Activated CD8-positive, alpha-beta T cell treated with anti-CD3 and anti-CD28 coated beads, Interleukin-2, amount 10 ng/mL, durations not matched to agents 7 days and 5 days (primary cell): ENCODE measurements at regions of chr6 and their contacts with region 1.

Region 1: GRCh38 chr6:73329201-73329600 is 24.9 kb downstream of the DPPA5 start:
- DNase-seq: no peak
- ATAC-seq: no peak
- H3K4me3 Mint-ChIP-seq: no peak overlapping the region
- H3K27ac Mint-ChIP-seq: no peak overlapping the region
- H3K4me1 Mint-ChIP-seq: no peaks in the 10 kb centered on the region
- H3K27me3 Mint-ChIP-seq: peaks cover 19% of the 10 kb centered on the region

Region 2: GRCh38 chr6:73074175-73074574 is 255.0 kb before region 1 on chr6:
- CTCF ChIA-PET with region 1: no interaction called
- POLR2A ChIA-PET with region 1: no interaction called
- DNase-seq: no peak
- ATAC-seq: no peak
- H3K4me3 Mint-ChIP-seq: no peak overlapping the region
- H3K27ac Mint-ChIP-seq: no peak overlapping the region
- H3K4me1 Mint-ChIP-seq: no peaks in the 10 kb centered on the region
- H3K27me3 Mint-ChIP-seq: no peaks in the 10 kb centered on the region

Region 3: DNA sequence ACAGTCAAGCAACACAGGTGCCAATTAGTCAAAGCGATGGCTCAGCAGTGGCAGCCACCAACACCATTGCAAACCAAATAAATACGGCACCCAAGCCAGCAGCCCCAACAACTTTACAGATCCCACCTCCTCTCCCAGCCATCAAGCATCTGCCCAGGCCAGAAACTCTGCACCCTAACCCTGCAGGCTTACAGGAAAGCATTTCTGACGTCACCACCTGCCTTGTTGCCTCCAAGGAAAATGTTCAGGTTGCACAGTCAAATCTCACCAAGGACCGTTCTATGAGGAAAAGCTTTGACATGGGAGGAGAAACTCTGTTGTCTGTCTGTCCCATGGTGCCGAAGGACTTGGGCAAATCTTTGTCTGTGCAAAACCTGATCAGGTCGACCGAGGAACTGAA is 134.5 kb before region 1 on chr6:
- CTCF ChIA-PET with region 1: no interaction called
- POLR2A ChIA-PET with region 1: no interaction called
- DNase-seq: no peak
- ATAC-seq: no peak
- H3K4me3 Mint-ChIP-seq: no peak overlapping the region
- H3K27ac Mint-ChIP-seq: no peak overlapping the region
- H3K4me1 Mint-ChIP-seq: no peaks in the 10 kb centered on the region
- H3K27me3 Mint-ChIP-seq: no peaks in the 10 kb centered on the region

Region 4: GRCh38 chr6:73285674-73286283 is 43.4 kb before region 1 on chr6:
- CTCF ChIA-PET with region 1: interaction called, 51 read pairs
- POLR2A ChIA-PET with region 1: no interaction called
- DNase-seq: no peak
- ATAC-seq: no peak
- H3K4me3 Mint-ChIP-seq: no peak overlapping the region
- H3K27ac Mint-ChIP-seq: no peak overlapping the region
- H3K4me1 Mint-ChIP-seq: no peaks in the 10 kb centered on the region
- H3K27me3 Mint-ChIP-seq: no peaks in the 10 kb centered on the region

Region 5: DNA sequence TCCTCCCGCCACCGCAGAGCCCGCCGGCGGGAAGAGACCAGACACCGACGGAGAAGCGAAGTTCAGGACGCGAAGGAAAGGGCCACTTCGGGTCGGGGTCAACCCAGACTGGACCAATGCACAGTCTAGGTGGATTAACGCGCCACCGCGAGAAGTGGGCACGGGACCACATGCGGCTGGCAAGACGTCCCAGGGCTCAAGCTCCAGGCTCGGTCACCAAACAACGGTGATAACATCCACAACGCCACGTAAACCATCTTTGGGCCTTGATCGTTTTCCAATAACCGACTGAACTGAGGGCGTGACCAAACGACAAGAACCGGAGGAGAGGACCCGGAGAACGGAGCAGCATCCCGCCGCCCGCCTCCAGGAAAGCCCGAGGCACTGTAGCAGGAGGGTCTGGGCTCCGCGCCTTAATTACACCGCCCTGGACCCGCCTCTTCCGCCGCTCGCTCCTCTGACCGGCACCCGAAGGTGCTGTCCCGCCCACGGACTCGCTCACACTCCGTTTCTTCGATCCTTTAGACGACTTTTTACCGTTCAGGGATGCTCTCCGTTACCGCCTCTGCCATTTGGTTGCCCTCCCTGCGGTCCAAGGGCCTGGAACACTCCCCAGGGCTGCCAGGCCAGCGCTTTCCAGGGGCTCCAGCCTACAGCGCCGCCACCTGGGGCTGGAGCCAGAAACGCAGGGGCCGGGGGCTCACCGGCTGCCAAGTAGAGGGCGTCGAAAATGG is 19.3 kb before region 1 on chr6:
- CTCF ChIA-PET with region 1: interaction called, 10 read pairs
- POLR2A ChIA-PET with region 1: no interaction called
- DNase-seq: peak; percentile 62
- ATAC-seq: peak; percentile 96
- H3K4me3 Mint-ChIP-seq: peak overlapping the region; percentile 94
- H3K27ac Mint-ChIP-seq: peak overlapping the region; percentile 87
- H3K4me1 Mint-ChIP-seq: peaks cover 42% of the 10 kb centered on the region
- H3K27me3 Mint-ChIP-seq: peaks cover 31% of the 10 kb centered on the region

Region 6: GRCh38 chr6:73388800-73389512 is 59.8 kb after region 1 on chr6:
- CTCF ChIA-PET with region 1: interaction called, 18 read pairs
- POLR2A ChIA-PET with region 1: interaction called, 4 read pairs
- DNase-seq: peak; percentile 76
- ATAC-seq: peak; percentile 92
- H3K4me3 Mint-ChIP-seq: peak overlapping the region; percentile 81
- H3K27ac Mint-ChIP-seq: peak overlapping the region; percentile 83
- H3K4me1 Mint-ChIP-seq: peaks cover 36% of the 10 kb centered on the region
- H3K27me3 Mint-ChIP-seq: peaks cover 2% of the 10 kb centered on the region

Region 7: GRCh38 chr6:73461537-73462350 is 132.5 kb after region 1 on chr6 and contains the start of gene MTO1:
- CTCF ChIA-PET with region 1: no interaction called
- POLR2A ChIA-PET with region 1: no interaction called
- DNase-seq: peak; percentile 92
- ATAC-seq: peak; percentile 91
- H3K4me3 Mint-ChIP-seq: peak within 1 kb of the TSS; percentile 94
- H3K27ac Mint-ChIP-seq: peak within 1 kb of the TSS; percentile 98
- H3K4me1 Mint-ChIP-seq: peaks cover 51% of the 10 kb centered on the region
- H3K27me3 Mint-ChIP-seq: no peaks in the 10 kb centered on the region
- total RNA-seq, gene MTO1: 51.7 to 54.3 TPM